ENCODE measurements at regions of chr3 and their contacts with region 1.

Region 1: DNA sequence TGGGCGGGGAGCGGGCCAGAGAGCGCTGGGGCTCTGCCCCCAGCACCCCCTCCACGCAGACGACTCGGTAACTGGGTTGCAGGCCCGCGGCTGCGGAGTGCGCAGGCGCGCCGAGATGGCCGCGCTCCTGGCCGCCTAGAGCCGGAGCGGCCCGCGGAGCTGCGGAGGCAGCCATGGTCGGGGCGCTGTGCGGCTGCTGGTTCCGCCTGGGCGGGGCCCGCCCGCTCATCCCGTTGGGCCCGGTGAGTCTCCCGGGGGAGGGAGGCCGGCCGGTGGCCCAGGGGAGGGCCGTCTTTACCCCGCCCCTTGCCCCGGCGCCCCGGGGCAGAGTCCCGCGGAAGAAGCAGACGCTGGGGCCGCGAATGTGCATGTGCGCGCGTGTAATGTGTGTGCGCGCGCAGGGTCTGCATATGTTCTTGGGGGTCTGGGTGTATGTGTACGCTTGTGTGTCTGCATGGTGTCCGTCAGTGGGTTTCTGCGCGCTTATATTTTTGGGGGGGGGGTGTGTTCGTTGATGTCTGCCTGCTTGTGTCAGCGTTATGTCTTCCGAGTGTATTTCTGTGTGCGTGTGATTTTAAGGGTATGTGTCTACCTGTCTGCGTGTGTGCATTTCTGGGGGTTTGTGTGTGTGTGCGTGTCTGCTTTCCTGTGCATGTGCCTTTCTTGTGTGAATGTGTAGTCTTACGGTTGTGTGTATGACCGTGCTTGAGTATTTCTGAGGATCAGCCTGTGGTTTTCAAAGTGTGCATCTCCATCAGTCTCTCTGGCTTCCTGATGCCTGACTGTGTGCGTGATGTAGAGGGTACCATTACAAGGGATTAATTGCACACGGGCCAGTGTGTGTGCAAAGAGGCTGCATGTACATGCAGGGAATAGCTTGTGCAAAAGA is at the start of gene ABHD14A:
- DNase-seq: peak; percentile 92
- H3K4me3 ChIP-seq: peak within 1 kb of the TSS; percentile 53 to 85
- H3K27ac ChIP-seq: peak within 1 kb of the TSS; percentile 63 to 90; a peak in 3 of 4 replicates
- H3K4me1 ChIP-seq: peaks cover 7 to 31% of the 10 kb centered on the region in 2 experiments
- H3K27me3 ChIP-seq: no peaks in the 10 kb centered on the region
- CTCF ChIP-seq: no peak
- EP300 ChIP-seq: no peak
- RAD21 ChIP-seq: no peak
- polyA plus RNA-seq, gene ABHD14A: 22.1 and 31.5 TPM in 2 replicates

Region 2: GRCh38 chr3:51947215-51947991 is 27.8 kb before region 1 on chr3:
- CTCF ChIA-PET with region 1: interaction called, 80 read pairs
- POLR2A ChIA-PET with region 1: interaction called, 13 read pairs
- DNase-seq: no peak
- H3K4me3 ChIP-seq: no peak overlapping the region
- H3K27ac ChIP-seq: no peak overlapping the region
- H3K4me1 ChIP-seq: peaks cover 10% of the 10 kb centered on the region in 2 experiments; a peak in 3 of 4 replicates
- H3K27me3 ChIP-seq: no peaks in the 10 kb centered on the region
- CTCF ChIP-seq: no peak
- EP300 ChIP-seq: no peak
- RAD21 ChIP-seq: no peak

Region 3: DNA sequence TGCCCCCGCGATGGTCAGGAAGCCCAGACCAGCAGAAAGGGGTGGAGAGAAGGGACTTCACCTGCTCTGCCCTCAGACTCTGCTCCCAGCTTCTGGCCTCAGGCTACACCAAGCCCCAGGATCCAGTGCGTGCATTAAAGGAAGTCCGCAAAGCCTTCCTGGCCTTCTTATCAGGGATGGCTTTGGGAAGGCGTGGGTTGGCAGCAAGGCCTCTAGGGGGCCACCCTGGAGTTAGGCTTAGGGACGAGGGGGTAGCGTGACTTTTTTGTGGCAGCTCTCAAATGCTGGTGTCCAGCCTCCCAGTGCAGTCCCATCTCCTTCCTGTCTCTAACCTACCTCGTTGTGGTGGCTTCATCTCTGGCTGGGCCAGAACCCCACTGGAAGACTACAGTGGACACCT is 39.4 kb after region 1 on chr3:
- CTCF ChIA-PET with region 1: interaction called, 12 read pairs
- POLR2A ChIA-PET with region 1: no interaction called
- DNase-seq: no peak
- H3K4me3 ChIP-seq: no peak overlapping the region
- H3K27ac ChIP-seq: peak overlapping the region in 1 of 2 experiments; percentile 98; a peak in 2 of 4 replicates
- H3K4me1 ChIP-seq: peaks cover 0 to 57% of the 10 kb centered on the region in 2 experiments; a peak in 1 of 4 replicates
- H3K27me3 ChIP-seq: no peaks in the 10 kb centered on the region
- CTCF ChIP-seq: peak; percentile 47
- EP300 ChIP-seq: no peak
- RAD21 ChIP-seq: peak; percentile 49

Measured in SK-N-SH (cell line).